Endothelial cell of umbilical vein (primary cell): ENCODE measurements at regions of chr7 and their contacts with region 1.

Region 1: DNA sequence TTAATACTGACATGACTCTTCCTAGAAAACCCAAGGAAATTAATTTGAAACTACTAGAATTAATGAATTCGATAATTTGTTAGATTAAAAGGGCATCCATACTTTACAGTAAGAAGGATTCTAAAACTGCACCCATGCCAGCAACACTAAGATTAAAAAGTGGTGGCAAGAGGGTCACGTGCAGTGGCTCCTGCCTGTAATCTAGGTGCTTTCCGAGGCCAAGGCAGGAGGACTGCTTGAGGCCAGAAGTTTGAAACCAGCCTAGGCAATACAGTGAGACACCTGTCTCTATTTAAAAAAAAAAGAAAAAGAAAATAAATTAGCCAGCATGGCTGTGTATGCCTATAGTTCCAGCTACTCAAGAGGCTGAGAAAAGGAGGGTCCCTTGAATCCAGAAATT is 58.2 kb downstream of the SRPK2 start:
- DNase-seq: no peak
- H3K4me3 ChIP-seq: no peak overlapping the region
- H3K27ac ChIP-seq: no peak overlapping the region
- H3K4me1 ChIP-seq: peaks cover 3% of the 10 kb centered on the region
- H3K27me3 ChIP-seq: no peaks in the 10 kb centered on the region
- CTCF ChIP-seq: no peak
- POLR2A ChIP-seq: no peak

Region 2: GRCh38 chr7:105149827-105150226 is 180.7 kb before region 1 on chr7:
- CTCF ChIA-PET with region 1: no interaction called
- POLR2A ChIA-PET with region 1: no interaction called
- dilution Hi-C with region 1: no loop called
- intact Hi-C with region 1: loop called (anchors 5 kb)
- DNase-seq: peak; percentile 77
- H3K4me3 ChIP-seq: no peak overlapping the region
- H3K27ac ChIP-seq: no peak overlapping the region
- H3K4me1 ChIP-seq: peaks cover 17% of the 10 kb centered on the region
- H3K27me3 ChIP-seq: no peaks in the 10 kb centered on the region
- CTCF ChIP-seq: no peak
- POLR2A ChIP-seq: no peak

Region 3: DNA sequence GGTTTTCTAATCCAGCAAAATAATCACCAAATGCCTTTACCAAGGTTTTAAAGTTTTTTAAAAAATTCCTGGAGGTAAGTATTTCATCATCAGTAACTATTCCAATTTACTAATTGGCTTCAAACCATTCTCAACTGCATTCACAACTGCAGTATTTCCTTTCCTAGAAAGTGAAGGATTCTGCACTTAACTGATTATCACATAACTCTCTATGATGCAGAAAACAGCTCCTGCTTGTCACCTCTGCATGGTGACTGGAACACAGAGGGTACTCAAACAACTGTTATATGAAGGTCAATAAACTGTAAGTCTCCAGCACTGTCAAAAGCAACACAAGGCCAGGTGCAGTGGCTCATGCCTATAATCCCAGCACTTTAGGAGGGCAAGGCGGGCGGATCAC is 15.6 kb after region 1 on chr7:
- CTCF ChIA-PET with region 1: no interaction called
- POLR2A ChIA-PET with region 1: no interaction called
- dilution Hi-C with region 1: no loop called
- intact Hi-C with region 1: no loop called
- DNase-seq: no peak
- H3K4me3 ChIP-seq: no peak overlapping the region
- H3K27ac ChIP-seq: no peak overlapping the region
- H3K4me1 ChIP-seq: no peaks in the 10 kb centered on the region
- H3K27me3 ChIP-seq: no peaks in the 10 kb centered on the region
- CTCF ChIP-seq: no peak
- POLR2A ChIP-seq: no peak